T-cell (primary cell): ENCODE measurements at regions of chr14 and their contacts with region 1.

Region 1: DNA sequence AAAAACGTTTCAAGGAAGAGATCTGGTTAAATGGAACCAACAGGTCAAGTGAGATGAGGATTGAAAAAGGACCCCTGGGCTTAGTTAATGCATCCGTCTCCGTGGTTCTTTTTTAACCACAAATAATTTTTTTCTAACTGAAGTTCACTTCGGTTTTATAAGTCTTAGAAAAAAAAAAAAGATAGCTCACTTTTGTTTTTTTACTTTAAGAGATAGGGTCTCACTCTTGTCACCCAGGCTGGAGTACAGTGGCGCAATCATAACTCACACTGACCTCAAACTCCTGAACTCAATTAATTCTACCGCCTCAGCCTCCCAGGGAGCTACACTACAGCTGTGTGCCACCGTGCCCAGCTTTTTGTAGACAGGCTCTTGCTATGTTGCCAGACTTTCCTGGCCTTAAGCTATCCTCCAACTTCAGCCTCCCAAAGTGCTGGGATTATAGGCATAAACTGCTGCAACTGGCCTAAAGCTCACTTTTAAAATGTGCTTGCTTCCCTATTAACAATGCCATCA is 11.8 kb downstream of the HNRNPC start:
- DNase-seq: peak in 1 of 35 experiments; percentile 30
- ATAC-seq: peak in 1 of 4 experiments; percentile 13
- H3K4me3 ChIP-seq: no peak overlapping the region
- H3K4me3 Mint-ChIP-seq: peak overlapping the region; percentile 45 to 58 (median 46)
- H3K27ac ChIP-seq: peak overlapping the region; percentile 36
- H3K27ac Mint-ChIP-seq: peak overlapping the region; percentile 40 to 89
- H3K4me1 ChIP-seq: peaks cover 30 to 57% of the 10 kb centered on the region in 2 experiments
- H3K4me1 Mint-ChIP-seq: peaks cover 82 to 87% (median 84%) of the 10 kb centered on the region in 3 donors
- H3K27me3 ChIP-seq: no peaks in the 10 kb centered on the region
- H3K27me3 Mint-ChIP-seq: no peaks in the 10 kb centered on the region

Region 2: DNA sequence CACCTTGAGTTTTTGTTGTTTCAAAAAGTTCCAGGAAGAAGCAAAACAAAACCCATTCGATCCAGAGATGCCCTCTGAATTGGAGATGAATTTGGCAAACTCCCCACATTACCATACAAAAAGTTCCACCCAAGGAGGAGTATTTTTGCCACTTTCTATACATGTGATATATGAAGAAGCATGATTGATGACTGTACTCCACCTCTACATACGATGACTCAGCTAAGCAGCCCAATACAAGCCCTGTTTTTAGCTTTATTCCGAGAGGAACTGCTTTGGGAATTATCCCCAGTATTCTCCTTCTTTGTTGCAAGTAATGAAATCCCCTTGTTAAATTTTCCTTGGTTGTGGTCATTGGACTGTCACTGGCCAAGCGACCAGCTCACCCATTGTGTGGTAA is 145.2 kb before region 1 on chr14:
- CTCF ChIA-PET with region 1: no interaction called
- POLR2A ChIA-PET with region 1: no interaction called
- DNase-seq: no peak
- ATAC-seq: no peak
- H3K4me3 ChIP-seq: no peak overlapping the region
- H3K4me3 Mint-ChIP-seq: no peak overlapping the region
- H3K27ac ChIP-seq: no peak overlapping the region
- H3K27ac Mint-ChIP-seq: no peak overlapping the region
- H3K4me1 ChIP-seq: no peaks in the 10 kb centered on the region
- H3K4me1 Mint-ChIP-seq: no peaks in the 10 kb centered on the region
- H3K27me3 ChIP-seq: no peaks in the 10 kb centered on the region
- H3K27me3 Mint-ChIP-seq: no peaks in the 10 kb centered on the region

Region 3: DNA sequence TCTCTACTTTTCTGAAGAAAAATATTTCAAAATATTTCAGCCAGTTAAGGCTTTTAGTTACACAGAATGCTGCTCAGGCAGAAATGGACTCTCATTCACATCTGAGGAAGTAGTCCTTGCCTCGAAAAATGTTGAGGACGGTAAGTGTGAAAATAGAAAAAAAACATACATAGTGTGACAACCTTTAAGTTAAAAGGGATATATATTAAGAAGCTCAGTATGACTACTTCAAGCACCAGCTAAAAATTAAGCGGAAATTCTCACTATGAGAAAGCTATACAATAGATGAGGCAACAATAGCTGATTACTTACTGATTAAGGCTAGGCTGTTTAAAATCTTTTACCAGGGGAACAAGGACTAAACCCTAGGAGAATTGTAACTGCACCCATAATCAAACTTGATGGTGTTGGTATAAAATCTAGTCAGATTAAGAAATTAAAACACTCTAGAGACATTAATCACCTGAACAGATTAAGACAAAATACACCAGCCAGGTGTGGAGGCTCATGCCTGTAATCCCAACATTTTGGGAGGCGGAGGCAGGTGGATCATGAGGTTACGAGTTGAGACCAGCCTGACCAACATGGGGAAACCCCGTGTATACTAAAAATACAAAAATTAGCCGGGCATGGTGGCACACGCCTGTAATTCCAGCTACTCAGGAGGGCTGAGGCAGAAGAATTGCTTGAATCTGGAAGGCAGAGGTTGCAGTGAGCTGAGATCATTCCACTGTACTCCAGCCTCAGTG is 42.1 kb before region 1 on chr14:
- CTCF ChIA-PET with region 1: interaction called in 1 of 2 experiments, 5 read pairs
- POLR2A ChIA-PET with region 1: interaction called, 6 to 10 read pairs
- DNase-seq: no peak
- ATAC-seq: peak in 1 of 4 experiments; percentile 15
- H3K4me3 ChIP-seq: peak overlapping the region in 1 of 2 donors; percentile 25
- H3K4me3 Mint-ChIP-seq: peak overlapping the region; percentile 28 to 69 (median 59)
- H3K27ac ChIP-seq: peak overlapping the region; percentile 44
- H3K27ac Mint-ChIP-seq: peak overlapping the region; percentile 56 to 86
- H3K4me1 ChIP-seq: peaks cover 23 to 33% of the 10 kb centered on the region in 2 experiments
- H3K4me1 Mint-ChIP-seq: peaks cover 71 to 82% (median 78%) of the 10 kb centered on the region in 3 donors
- H3K27me3 ChIP-seq: no peaks in the 10 kb centered on the region
- H3K27me3 Mint-ChIP-seq: no peaks in the 10 kb centered on the region

Region 4: GRCh38 chr14:21233457-21234076 is 23.9 kb before region 1 on chr14:
- CTCF ChIA-PET with region 1: interaction called in 1 of 2 experiments, 5 read pairs
- POLR2A ChIA-PET with region 1: interaction called, 7 to 19 read pairs
- DNase-seq: peak in 1 of 35 experiments; percentile 53
- ATAC-seq: no peak
- H3K4me3 ChIP-seq: no peak overlapping the region
- H3K4me3 Mint-ChIP-seq: peak overlapping the region in 2 of 3 donors; percentile 19 to 31
- H3K27ac ChIP-seq: peak overlapping the region; percentile 69
- H3K27ac Mint-ChIP-seq: peak overlapping the region; percentile 56 to 76
- H3K4me1 ChIP-seq: peaks cover 42 to 55% of the 10 kb centered on the region in 2 experiments
- H3K4me1 Mint-ChIP-seq: peaks cover 84 to 93% (median 92%) of the 10 kb centered on the region in 3 donors
- H3K27me3 ChIP-seq: no peaks in the 10 kb centered on the region
- H3K27me3 Mint-ChIP-seq: no peaks in the 10 kb centered on the region

Region 5: DNA sequence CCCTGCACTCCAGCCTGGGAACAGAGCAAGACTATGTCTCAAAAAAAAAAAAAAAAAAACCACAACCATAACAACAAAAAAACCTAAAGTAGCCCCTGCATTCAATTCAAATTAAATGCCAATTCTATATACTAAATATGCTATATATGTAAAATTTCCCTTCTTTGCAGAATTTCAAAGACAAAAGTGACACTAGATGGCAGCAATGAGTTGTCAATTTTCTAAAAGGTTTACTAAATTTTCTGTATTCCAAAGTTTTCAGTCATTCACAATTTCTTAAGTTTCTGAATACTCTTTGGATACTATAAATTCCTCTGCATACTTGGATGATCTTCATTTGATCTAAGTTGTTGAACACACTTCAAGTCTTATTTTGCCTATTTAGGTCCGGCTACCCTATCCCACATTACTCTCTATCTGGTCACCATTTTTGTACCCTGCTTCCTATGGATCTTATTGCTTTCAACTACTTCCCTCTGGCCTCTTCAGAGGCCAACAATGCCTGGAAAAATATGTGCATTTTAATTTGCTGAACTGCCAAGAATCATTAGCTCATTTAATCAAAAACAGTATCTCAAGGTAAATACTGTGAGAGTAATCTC is 16.1 kb before region 1 on chr14:
- CTCF ChIA-PET with region 1: interaction called in 1 of 2 experiments, 11 read pairs
- POLR2A ChIA-PET with region 1: interaction called, 10 to 20 read pairs
- DNase-seq: peak in 1 of 35 experiments; percentile 69
- ATAC-seq: no peak
- H3K4me3 ChIP-seq: no peak overlapping the region
- H3K4me3 Mint-ChIP-seq: peak overlapping the region in 1 of 3 donors; percentile 22
- H3K27ac ChIP-seq: no peak overlapping the region
- H3K27ac Mint-ChIP-seq: peak overlapping the region; percentile 34 to 76
- H3K4me1 ChIP-seq: peaks cover 14 to 41% of the 10 kb centered on the region in 2 experiments
- H3K4me1 Mint-ChIP-seq: peaks cover 72 to 84% (median 79%) of the 10 kb centered on the region in 3 donors
- H3K27me3 ChIP-seq: no peaks in the 10 kb centered on the region
- H3K27me3 Mint-ChIP-seq: no peaks in the 10 kb centered on the region

Region 6: DNA sequence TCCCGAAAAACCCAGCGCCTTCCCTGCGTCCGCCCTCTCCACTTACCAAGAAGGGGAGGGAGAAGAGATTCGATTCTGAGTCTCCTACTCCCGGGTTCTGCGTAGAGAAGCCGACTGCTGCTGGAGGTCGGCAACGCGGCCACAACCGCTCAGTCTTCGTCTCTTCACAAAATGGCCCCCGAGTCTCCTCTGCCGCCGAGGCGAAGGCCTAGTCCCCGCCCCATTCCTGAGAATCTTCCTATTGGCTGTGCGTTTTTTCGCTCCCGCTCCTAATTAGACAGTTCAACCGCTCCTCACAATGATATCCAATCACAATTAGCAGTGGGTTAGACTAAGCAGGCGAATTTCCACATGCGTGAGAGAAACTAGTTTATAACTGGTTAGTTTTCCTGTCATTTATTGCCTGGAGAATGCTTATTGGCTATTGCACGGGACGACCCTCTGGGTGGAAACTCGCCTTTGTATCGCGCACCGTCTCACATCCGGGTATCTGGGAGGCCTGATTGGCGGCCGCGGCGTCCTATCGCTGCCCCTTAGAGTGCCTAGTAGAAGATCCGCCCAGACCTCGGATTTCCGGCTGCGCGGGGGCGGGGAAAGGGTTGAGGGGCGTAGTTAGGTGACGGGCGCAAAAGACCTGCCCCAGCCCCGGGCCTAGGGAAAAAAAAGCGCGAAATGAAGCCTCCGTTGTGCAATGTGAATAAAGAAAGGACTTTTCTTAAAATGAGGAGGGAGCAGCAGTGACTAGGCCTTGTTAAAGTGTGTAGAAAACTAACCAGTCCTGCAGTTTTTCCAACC is 12.0 kb after region 1 on chr14 and contains the start of gene HNRNPC:
- CTCF ChIA-PET with region 1: interaction called, 7 to 11 read pairs
- POLR2A ChIA-PET with region 1: interaction called, 14 to 88 read pairs
- DNase-seq: peak; percentile 99 to 100 (median 100)
- ATAC-seq: peak; percentile 90 to 91 (median 91)
- H3K4me3 ChIP-seq: peak within 1 kb of the TSS; percentile 91 to 92
- H3K4me3 Mint-ChIP-seq: peak within 1 kb of the TSS; percentile 90 to 100 (median 100)
- H3K27ac ChIP-seq: peak within 1 kb of the TSS; percentile 97
- H3K27ac Mint-ChIP-seq: peak within 1 kb of the TSS; percentile 100
- H3K4me1 ChIP-seq: peaks cover 23 to 30% of the 10 kb centered on the region in 2 experiments
- H3K4me1 Mint-ChIP-seq: peaks cover 36 to 45% (median 38%) of the 10 kb centered on the region in 3 donors
- H3K27me3 ChIP-seq: no peaks in the 10 kb centered on the region
- H3K27me3 Mint-ChIP-seq: no peaks in the 10 kb centered on the region
- total RNA-seq, gene HNRNPC: 417 to 530 (median 441) TPM

Region 7: DNA sequence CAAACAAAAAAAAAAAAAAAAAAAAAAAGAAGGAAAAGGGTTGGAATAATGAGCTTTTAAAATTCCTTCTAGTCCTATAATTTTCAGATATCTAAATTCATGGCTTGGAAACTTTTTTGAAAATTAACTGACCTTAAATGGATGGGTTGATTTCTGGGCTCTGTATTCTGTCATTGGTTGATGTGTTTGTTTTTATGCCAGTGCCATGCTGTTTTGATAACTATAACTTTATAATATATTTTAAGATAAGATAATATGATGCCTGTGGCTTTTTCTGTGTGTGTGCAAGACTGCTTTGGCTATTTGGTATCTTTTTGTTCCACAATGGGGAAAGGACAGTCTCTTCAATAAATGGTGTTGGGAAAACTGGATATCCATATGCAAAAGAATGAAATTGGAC is 315.2 kb after region 1 on chr14:
- CTCF ChIA-PET with region 1: no interaction called
- POLR2A ChIA-PET with region 1: interaction called in 1 of 2 experiments, 10 read pairs
- DNase-seq: no peak
- ATAC-seq: no peak
- H3K4me3 ChIP-seq: no peak overlapping the region
- H3K4me3 Mint-ChIP-seq: no peak overlapping the region
- H3K27ac ChIP-seq: no peak overlapping the region
- H3K27ac Mint-ChIP-seq: no peak overlapping the region
- H3K4me1 ChIP-seq: no peaks in the 10 kb centered on the region
- H3K4me1 Mint-ChIP-seq: no peaks in the 10 kb centered on the region
- H3K27me3 ChIP-seq: peaks cover 0 to 11% of the 10 kb centered on the region in 2 experiments
- H3K27me3 Mint-ChIP-seq: peaks cover 18 to 29% of the 10 kb centered on the region in 2 donors

Region 8: DNA sequence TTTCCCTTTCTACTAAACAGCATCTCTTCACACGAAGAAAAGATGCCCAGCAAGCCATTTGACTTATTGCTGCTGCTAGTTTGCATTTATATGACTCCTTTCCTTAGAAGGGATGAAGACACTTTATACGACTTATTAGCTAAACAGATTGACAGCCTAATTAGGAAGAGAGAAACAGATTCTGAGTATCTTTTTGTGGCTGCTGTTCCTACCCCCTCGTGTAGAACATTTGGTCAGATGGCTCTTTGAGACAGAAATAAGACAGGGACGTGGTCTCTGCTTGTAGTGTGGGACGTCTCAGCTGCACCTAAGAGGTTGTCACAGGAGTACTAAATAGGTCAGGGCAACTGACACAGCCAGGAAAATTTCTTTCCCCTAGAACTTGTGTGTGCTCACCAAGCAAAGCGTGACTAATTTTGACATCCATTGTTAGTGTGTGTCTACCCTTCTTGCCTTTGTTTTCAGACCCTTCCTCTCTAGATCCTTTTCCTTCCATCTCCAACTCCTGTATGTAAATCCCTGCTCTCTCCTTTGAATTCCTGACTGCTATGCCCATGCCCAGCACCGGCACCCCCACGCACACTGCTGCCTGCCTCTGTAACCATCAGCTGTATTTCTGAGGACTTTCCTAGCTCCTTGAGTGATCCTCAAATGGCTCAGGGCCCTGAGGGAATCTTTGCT is 1248.4 kb after region 1 on chr14:
- CTCF ChIA-PET with region 1: no interaction called
- POLR2A ChIA-PET with region 1: interaction called in 1 of 2 experiments, 13 read pairs
- DNase-seq: peak in 1 of 35 experiments; percentile 54
- ATAC-seq: peak; percentile 17 to 55 (median 46)
- H3K4me3 ChIP-seq: peak overlapping the region; percentile 52 to 58
- H3K4me3 Mint-ChIP-seq: peak overlapping the region; percentile 82 to 86 (median 83)
- H3K27ac ChIP-seq: peak overlapping the region; percentile 90
- H3K27ac Mint-ChIP-seq: peak overlapping the region; percentile 95 to 96
- H3K4me1 ChIP-seq: peaks cover 26 to 55% of the 10 kb centered on the region in 2 experiments
- H3K4me1 Mint-ChIP-seq: peaks cover 55 to 84% (median 75%) of the 10 kb centered on the region in 3 donors
- H3K27me3 ChIP-seq: no peaks in the 10 kb centered on the region
- H3K27me3 Mint-ChIP-seq: no peaks in the 10 kb centered on the region